ENCODE measurements at regions of chr1 and their contacts with region 1.

Region 1: DNA sequence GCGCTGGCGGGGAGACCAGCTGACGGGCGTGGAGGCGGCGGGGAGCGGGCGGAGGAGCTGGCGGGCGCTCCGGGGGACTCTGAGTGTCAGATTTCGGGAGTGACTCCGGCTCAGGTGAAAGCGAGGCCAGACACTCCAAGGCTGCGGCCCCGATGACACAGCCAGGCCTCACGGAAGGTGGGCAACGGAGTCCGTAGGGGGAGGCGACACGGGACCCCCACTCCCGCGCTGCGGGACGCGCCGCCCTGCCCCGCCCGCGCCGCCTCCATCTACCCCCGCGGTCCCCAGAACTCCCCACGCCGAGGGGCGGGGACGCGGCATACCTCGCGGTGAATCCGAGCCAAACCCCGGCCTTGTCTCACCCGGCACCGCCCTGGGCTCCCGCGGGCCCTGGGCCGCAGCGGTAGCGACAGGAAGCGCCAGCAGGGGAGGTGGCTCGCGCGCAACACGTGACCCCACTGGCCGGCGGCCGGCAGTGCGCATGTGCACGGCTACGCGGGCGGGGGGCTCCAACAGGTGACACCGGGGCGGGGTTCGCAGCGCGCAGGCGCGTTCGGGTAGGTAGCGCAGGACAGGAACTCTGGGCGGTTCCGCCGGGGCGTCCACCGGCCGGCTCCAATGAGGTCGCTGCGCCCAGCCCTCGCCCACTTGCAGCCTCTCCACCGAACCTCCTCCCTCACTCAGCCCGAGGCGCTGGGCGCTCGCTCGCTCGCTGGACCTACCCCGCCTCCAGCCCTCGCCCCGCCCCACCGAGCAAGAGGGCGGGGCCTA is at the start of gene CC2D1B:
- DNase-seq: peak; percentile 98 to 99
- ATAC-seq: peak; percentile 91 to 92 (median 91)
- H3K4me3 ChIP-seq: peak within 1 kb of the TSS; percentile 81
- H3K27ac ChIP-seq: peak within 1 kb of the TSS; percentile 93
- H3K4me1 ChIP-seq: peaks cover 14% of the 10 kb centered on the region
- H3K27me3 ChIP-seq: no peaks in the 10 kb centered on the region
- CTCF ChIP-seq: no peak
- total RNA-seq, gene CC2D1B: 30.3 to 47.8 (median 33.7) TPM

Region 2: GRCh38 chr1:52404116-52404986 is 38.4 kb after region 1 on chr1 and contains the starts of genes ORC1 and PRPF38A:
- intact Hi-C with region 1: loop called in 1 of 2 experiments (anchors 2 kb)
- DNase-seq: peak; percentile 95 to 98
- ATAC-seq: peak; percentile 99 to 100 (median 99)
- H3K4me3 ChIP-seq: peak within 1 kb of the TSS; percentile 92
- H3K27ac ChIP-seq: peak within 1 kb of the TSS; percentile 95
- H3K4me1 ChIP-seq: peaks cover 15% of the 10 kb centered on the region
- H3K27me3 ChIP-seq: no peaks in the 10 kb centered on the region
- CTCF ChIP-seq: peak; percentile 57
- total RNA-seq, gene ORC1: 0.10 to 0.25 (median 0.19) TPM
- total RNA-seq, gene PRPF38A: 11.6 to 25.6 (median 17.6) TPM

Measured in psoas muscle (tissue), 8 donors.